Tibial artery (tissue), 4 donors: ENCODE measurements at regions of chr18 and their contacts with region 1.

Region 1: GRCh38 chr18:59056706-59057492 is 82.8 kb upstream of the SEC11C start:
- DNase-seq: peak in 1 of 2 donors; percentile 89
- H3K4me3 ChIP-seq: no peak overlapping the region
- H3K27ac ChIP-seq: peak overlapping the region; percentile 80 to 82
- H3K4me1 ChIP-seq: peaks cover 0 to 68% (median 44%) of the 10 kb centered on the region in 4 donors
- H3K27me3 ChIP-seq: no peaks in the 10 kb centered on the region
- CTCF ChIP-seq: peak; percentile 55 to 58

Region 2: GRCh38 chr18:58781627-58782194 is 275.2 kb before region 1 on chr18:
- intact Hi-C with region 1: loop called (anchors 2 kb)
- DNase-seq: peak; percentile 81 to 88
- H3K4me3 ChIP-seq: no peak overlapping the region
- H3K27ac ChIP-seq: peak overlapping the region; percentile 51 to 63
- H3K4me1 ChIP-seq: peaks cover 0 to 37% (median 20%) of the 10 kb centered on the region in 4 donors
- H3K27me3 ChIP-seq: no peaks in the 10 kb centered on the region
- CTCF ChIP-seq: peak; percentile 85 to 98

Region 3: DNA sequence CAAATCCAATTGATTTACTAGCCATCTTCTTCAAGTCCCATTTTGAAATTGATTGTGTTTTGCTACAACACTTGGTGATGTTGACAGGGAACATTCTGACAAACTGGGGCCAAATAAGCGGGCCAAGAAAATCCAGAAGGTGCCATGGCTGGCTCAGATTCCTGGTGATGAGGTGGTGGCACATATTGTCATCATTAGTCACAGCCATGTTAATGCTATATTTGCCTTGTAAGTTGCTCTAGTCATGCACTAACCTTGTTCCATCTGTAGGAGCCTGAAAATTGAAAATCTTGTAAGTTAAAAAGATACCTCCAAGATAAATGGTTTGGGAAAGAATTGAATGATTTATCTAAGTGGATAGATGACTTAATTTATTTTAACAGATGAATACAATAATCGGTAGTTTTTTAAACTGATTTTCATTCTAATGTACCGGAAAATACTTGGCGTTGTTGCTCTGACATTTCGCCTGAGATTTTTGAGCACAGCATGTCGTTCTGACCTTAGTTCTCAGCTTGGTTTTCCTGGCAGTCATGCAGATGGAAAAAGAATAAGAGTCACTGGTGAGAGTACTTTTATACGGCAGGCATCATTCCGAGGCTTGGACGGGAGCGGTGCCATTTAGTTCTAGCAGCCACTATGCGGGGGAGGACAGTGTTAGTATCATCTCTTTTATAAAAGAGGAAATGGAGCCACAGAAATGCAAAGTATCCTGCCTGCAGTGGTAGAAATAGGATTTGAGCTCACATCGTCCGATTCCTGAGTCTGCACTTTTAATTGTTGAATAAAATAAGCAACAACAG is 58.3 kb before region 1 on chr18:
- intact Hi-C with region 1: loop called (anchors 5 kb)
- DNase-seq: peak; percentile 79 to 87
- H3K4me3 ChIP-seq: peak overlapping the region in 1 of 2 donors; percentile 5
- H3K27ac ChIP-seq: peak overlapping the region; percentile 78 to 84
- H3K4me1 ChIP-seq: peaks cover 0 to 66% (median 43%) of the 10 kb centered on the region in 4 donors
- H3K27me3 ChIP-seq: no peaks in the 10 kb centered on the region
- CTCF ChIP-seq: peak in 1 of 2 experiments; percentile 55

Region 4: DNA sequence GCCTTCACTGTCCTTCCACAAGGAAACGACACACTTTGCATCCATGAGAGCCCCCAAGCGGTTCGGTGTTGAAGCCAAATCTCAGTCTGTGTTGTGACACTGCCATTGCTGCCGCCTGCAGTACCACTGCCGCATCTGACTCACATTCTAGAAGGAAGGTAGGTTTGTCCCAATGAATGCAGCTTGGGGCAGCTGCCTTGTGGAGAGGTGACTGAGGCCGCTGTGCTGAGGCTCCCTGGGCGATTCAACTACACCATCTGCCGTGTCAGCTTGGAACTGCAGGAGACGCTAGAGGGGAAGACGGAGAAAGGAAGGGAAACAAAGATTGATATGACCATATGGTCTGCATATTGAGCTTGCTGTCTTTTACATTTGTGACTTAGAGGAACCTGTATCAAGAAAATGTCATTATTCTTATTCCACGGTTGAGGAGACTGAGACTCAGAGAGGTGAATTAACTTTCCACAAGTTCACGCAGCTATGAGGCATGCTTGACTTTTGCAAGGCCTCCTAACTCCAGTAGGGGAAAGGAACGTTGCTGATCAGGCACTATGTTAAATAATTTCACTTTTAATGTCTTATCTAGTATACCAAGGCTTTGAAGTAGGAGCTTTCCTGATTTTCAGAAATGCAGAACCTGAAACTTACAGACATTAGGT is 345.7 kb after region 1 on chr18:
- intact Hi-C with region 1: no loop called
- DNase-seq: peak; percentile 57 to 71
- H3K4me3 ChIP-seq: no peak overlapping the region
- H3K27ac ChIP-seq: no peak overlapping the region
- H3K4me1 ChIP-seq: no peaks in the 10 kb centered on the region
- H3K27me3 ChIP-seq: no peaks in the 10 kb centered on the region
- CTCF ChIP-seq: peak; percentile 84 to 93